ENCODE measurements at regions of chr6 and their contacts with region 1.

Region 1: GRCh38 chr6:115896538-115897129 is 164.1 kb downstream of the FRK start:
- ATAC-seq: peak; percentile 38 to 72 (median 62)
- H3K4me3 ChIP-seq: no peak overlapping the region
- H3K27ac ChIP-seq: no peak overlapping the region
- H3K4me1 ChIP-seq: peaks cover 0 to 3% of the 10 kb centered on the region in 2 donors

Region 2: DNA sequence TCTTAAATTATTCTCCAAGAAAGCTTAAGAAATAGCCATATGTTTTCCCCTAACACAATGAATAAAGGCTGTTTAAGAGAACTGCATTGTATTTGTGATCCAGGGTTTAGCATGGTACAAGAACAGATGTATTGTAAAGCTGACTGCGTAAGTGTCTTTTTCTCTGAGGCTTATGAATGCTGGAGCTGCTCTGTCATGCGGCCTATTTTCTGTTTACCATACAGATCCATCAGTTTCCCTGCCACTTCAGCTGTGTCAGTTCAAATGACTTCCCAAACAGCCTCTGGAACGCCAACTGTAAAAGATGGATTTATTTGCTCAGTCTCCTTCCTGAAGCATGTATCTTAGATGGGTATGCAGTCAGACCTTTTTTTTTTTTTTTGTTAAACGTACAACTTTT is 1134.5 kb before region 1 on chr6:
- in situ Hi-C with region 1: loop called in 1 of 9 experiments (anchors 25 kb)
- ATAC-seq: peak in 5 of 8 experiments; percentile 67 to 99 (median 95)
- H3K4me3 ChIP-seq: no peak overlapping the region
- H3K27ac ChIP-seq: no peak overlapping the region
- H3K4me1 ChIP-seq: peaks cover 7 to 8% of the 10 kb centered on the region in 2 donors

Region 3: DNA sequence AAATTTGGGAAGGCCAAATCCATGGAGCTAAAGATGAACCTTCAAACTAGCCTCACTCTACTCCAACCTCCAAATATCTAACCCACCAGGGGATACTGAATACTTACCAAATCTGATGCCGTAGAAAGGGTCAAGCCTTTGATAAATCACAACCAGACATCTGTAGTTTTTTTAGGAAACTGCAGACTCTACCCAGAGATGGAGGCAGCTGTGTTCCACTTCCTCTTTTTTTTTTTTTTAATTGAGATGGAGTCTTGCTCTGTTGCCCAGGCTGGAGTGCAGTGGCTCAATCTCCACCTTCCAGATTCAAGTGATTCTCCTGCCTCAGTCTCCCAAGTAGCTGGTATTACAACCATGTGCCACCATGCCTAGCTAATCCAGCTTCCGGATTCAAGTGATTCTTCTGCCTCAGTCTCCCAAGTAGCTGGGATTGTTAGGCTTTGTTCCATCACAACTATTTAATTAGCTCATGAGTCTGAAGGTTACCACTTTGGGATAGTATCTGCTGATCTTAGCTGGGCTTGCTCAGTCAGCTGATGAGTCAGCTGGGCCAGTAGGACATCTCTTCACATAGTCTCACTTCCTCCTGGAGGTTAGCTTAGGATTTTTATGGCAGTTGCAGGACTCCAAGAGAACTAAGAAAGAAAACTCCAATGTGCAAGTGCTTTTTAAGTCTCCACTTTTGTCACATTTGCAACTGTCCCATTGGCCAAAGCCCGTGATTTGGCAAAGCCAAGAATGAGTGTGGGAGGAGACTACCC is 150.7 kb after region 1 on chr6:
- in situ Hi-C with region 1: no loop called
- ATAC-seq: no peak
- H3K4me3 ChIP-seq: no peak overlapping the region
- H3K27ac ChIP-seq: no peak overlapping the region
- H3K4me1 ChIP-seq: no peaks in the 10 kb centered on the region

Measured in motor neuron (in vitro differentiated cells).